AG04450 (cell line): ENCODE measurements at regions of chr17 and their contacts with region 1.

Region 1: GRCh38 chr17:4616476-4616875 is 25.0 kb downstream of the ALOX15 start:
- DNase-seq: no peak
- H3K4me3 ChIP-seq: no peak overlapping the region
- H3K27ac ChIP-seq: no peak overlapping the region
- H3K27me3 ChIP-seq: peaks cover 18% of the 10 kb centered on the region
- CTCF ChIP-seq: no peak

Region 2: DNA sequence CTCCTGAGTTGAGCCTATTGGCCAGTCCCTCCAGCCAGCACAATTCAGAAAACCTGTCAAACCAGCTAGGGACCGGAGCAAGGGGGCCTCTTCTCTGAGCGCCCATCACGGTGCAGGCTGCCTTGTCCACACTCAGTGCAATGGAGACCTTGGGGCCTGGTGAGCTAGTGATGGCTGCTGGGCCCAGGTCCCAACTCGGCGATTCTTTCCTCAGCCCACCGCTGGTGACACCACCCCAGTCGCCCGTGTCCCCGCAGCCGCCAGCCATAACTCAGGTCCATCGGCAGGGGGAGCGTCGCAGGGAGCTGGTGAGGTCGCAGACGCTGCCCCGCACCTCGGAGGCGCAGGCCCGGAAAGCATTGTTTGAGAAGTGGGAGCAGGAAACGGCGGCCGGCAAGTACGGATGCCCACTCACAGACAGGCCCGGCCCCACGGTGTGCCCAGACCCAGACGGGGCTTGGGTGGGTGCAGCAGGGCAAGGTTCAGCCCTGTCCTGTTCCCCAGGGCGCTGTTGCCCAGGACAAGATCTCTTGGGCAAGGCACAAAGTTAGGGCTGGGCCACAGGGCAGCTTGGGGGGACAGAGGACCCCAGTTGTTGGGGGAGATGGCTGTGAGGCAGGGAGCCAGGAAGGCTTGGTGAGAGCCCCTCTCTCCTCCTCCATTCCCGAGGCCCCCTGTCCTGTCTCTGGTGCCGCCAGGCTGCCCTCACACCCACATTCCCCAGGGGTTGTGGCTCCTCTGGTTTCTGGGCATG is 21.4 kb before region 1 on chr17:
- CTCF ChIA-PET with region 1: no interaction called
- POLR2A ChIA-PET with region 1: interaction called, 20 read pairs
- DNase-seq: no peak
- H3K4me3 ChIP-seq: no peak overlapping the region
- H3K27ac ChIP-seq: no peak overlapping the region
- H3K27me3 ChIP-seq: peaks cover 54% of the 10 kb centered on the region
- CTCF ChIP-seq: peak; percentile 15; the same call in 1 of the 2 replicates

Region 3: GRCh38 chr17:4605826-4606225 is 10.7 kb before region 1 on chr17:
- CTCF ChIA-PET with region 1: no interaction called
- POLR2A ChIA-PET with region 1: no interaction called
- DNase-seq: no peak
- H3K4me3 ChIP-seq: no peak overlapping the region
- H3K27ac ChIP-seq: no peak overlapping the region
- H3K27me3 ChIP-seq: peaks cover 26% of the 10 kb centered on the region
- CTCF ChIP-seq: no peak